ENCODE measurements at regions of chr10 and their contacts with region 1.

Region 1: GRCh38 chr10:112347709-112348671 is 25.9 kb upstream of the ACSL5 start:
- DNase-seq: no peak
- H3K4me3 ChIP-seq: no peak overlapping the region
- H3K27ac ChIP-seq: no peak overlapping the region
- H3K4me1 ChIP-seq: no peaks in the 10 kb centered on the region
- H3K27me3 ChIP-seq: no peaks in the 10 kb centered on the region
- CTCF ChIP-seq: no peak

Region 2: GRCh38 chr10:111392159-111392558 is 955.8 kb before region 1 on chr10:
- CTCF ChIA-PET with region 1: no interaction called
- POLR2A ChIA-PET with region 1: no interaction called
- intact Hi-C with region 1: no loop called
- DNase-seq: no peak
- H3K4me3 ChIP-seq: no peak overlapping the region
- H3K27ac ChIP-seq: no peak overlapping the region
- H3K4me1 ChIP-seq: no peaks in the 10 kb centered on the region
- H3K27me3 ChIP-seq: no peaks in the 10 kb centered on the region
- CTCF ChIP-seq: no peak

Region 3: GRCh38 chr10:112526139-112526538 is 178.1 kb after region 1 on chr10:
- CTCF ChIA-PET with region 1: no interaction called
- POLR2A ChIA-PET with region 1: interaction called, 11 read pairs
- intact Hi-C with region 1: no loop called
- DNase-seq: no peak
- H3K4me3 ChIP-seq: no peak overlapping the region
- H3K27ac ChIP-seq: peak overlapping the region; percentile 54
- H3K4me1 ChIP-seq: peaks cover 28% of the 10 kb centered on the region
- H3K27me3 ChIP-seq: no peaks in the 10 kb centered on the region
- CTCF ChIP-seq: no peak